Caco-2 (cell line): ENCODE measurements at regions of chr1 and their contacts with region 1.

Region 1: DNA sequence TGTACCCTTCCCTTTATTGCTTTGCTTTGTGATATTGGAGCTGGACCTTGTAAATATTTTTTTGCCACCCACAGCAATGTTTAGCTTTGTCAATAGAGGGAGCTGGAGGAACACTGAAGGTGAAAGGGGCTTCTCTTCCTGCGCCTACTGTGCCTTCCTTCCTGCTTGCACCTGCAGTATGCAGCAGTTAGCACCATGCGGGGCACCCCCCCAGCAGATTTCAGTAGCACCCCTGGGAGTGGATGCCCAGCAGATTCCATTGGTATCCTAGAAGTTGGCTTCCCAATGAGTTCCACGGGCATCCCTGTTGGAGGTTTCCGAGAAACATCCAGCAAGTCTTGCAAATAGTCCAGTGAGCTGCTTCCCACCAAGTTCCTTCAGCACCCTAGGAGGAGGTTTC is 25.6 kb downstream of the S100A10 start:
- DNase-seq: peak; percentile 69 to 77
- H3K4me3 ChIP-seq: no peak overlapping the region
- H3K4me3 Mint-ChIP-seq: no peak overlapping the region
- H3K27ac Mint-ChIP-seq: no peak overlapping the region
- H3K4me1 ChIP-seq: peaks cover 52% of the 10 kb centered on the region
- H3K4me1 Mint-ChIP-seq: peaks cover 34% of the 10 kb centered on the region
- H3K27me3 ChIP-seq: no peaks in the 10 kb centered on the region
- H3K27me3 Mint-ChIP-seq: no peaks in the 10 kb centered on the region
- CTCF ChIP-seq: peak; percentile 70 to 80

Region 2: DNA sequence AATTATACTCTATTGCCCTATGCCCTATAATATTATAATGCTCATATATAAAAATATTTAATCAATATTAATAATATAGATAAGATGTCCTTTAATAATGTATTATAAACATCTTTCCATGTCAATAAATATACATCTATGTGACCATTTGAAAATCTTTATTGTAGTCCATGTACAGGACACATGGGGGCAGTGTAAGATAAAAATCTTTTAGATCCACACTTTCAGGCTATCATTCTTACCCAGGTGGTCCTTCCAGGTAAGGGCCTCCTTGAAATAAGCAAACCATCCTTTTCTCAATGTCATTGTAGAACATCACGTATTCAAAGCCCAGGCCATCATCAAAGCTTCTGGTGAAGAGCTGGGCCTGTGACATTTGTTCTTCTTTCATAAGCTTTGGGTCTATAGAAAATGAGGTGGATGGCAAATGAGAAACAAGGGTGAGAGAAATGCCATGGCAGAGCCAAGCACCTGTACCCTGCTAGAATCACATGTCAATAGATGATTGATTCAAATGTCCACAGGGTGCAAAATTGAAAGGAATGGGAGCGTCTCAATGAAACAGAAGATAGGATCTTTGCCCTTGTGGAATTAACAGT is 79.0 kb before region 1 on chr1:
- CTCF ChIA-PET with region 1: no interaction called
- POLR2A ChIA-PET with region 1: no interaction called
- intact Hi-C with region 1: loop called (anchors 2 kb)
- DNase-seq: peak in 1 of 2 experiments; percentile 20
- H3K4me3 ChIP-seq: no peak overlapping the region
- H3K4me3 Mint-ChIP-seq: no peak overlapping the region
- H3K27ac Mint-ChIP-seq: no peak overlapping the region
- H3K4me1 ChIP-seq: no peaks in the 10 kb centered on the region
- H3K4me1 Mint-ChIP-seq: peaks cover 6% of the 10 kb centered on the region
- H3K27me3 ChIP-seq: no peaks in the 10 kb centered on the region
- H3K27me3 Mint-ChIP-seq: no peaks in the 10 kb centered on the region
- CTCF ChIP-seq: peak; percentile 38 to 53

Region 3: DNA sequence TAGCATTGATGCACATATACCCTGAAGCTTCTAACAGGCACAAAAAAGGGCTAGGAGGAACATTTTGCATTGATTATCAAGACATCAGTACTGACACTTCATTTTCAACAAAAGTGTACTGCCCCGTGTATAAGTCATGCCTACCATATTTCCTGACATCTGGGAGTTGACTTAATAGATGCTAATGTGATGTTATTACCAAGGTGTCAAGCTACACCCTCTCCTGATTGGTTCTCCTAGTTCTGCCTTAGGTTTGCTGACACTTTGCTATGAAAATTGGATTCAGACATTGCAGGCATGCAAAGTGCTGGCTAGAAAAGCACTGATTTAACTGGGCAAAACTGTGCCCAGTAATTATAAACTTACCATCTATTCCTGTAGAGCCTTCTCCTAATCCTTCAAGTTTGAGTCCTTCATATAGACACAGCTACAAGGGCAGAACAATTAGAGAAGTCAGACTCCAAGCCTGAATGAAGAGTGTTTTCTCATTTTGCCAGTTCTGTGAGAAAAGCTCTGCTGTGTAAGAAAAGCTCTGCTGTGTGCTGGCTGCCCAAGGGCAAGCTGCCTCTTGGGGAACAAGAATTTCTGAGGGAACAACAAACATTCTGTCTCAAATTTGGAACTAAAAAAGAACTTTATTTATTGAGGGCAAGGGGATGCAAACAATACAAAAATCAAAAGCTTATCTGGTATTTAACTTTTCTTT is 14.4 kb after region 1 on chr1:
- CTCF ChIA-PET with region 1: interaction called, 11 read pairs
- POLR2A ChIA-PET with region 1: interaction called, 10 read pairs
- intact Hi-C with region 1: loop called (anchors 1 kb)
- DNase-seq: no peak
- H3K4me3 ChIP-seq: no peak overlapping the region
- H3K4me3 Mint-ChIP-seq: peak overlapping the region; percentile 20
- H3K27ac Mint-ChIP-seq: peak overlapping the region; percentile 85
- H3K4me1 ChIP-seq: peaks cover 97% of the 10 kb centered on the region
- H3K4me1 Mint-ChIP-seq: peaks cover 77% of the 10 kb centered on the region
- H3K27me3 ChIP-seq: no peaks in the 10 kb centered on the region
- H3K27me3 Mint-ChIP-seq: no peaks in the 10 kb centered on the region
- CTCF ChIP-seq: no peak

Region 4: DNA sequence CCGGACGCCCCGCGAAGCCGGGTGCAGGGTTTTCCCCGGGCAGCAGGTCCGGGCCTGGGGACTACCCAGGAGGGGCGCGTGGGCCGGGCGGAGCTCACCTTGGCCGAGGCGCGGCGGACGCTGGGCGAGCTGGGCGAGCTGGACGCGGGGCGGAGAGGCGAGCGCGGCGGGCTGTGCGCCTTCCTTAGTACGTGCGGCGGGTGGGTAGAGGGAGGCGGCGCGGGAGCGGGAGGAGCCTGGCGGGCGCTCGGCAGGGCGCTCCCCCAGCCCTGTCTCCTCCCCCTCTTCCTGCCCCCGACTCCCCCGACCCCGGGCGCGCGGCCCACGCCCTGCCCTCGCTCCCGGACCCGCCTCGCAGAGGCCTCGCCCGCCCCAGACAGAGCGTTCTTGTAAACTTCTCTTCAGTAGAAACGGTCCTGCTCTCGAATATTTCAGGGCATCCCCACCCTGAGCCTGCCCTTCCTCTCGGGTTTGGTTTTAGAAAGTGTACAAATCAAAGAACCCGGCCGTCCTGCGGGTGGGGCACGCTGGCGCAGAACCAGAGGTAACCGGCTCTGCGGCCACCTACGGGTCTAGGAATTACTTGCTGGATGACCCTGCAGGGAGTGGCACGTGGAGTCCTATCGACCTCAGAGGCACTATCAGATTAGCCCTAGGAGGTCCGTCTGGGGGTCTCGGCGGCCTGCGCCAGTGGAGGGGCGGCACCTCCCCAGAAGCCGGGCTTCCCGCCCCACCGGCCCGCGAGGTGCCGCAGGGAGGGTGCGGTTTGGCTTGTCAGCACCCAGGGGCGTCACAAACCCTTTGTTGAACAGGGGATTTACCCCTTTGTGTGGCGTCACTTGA is 25.8 kb after region 1 on chr1 and contains the start of gene S100A10:
- CTCF ChIA-PET with region 1: interaction called, 249 read pairs
- POLR2A ChIA-PET with region 1: interaction called, 11 read pairs
- intact Hi-C with region 1: loop called (anchors 1 kb)
- DNase-seq: peak; percentile 90 to 91
- H3K4me3 ChIP-seq: peak within 1 kb of the TSS; percentile 88
- H3K4me3 Mint-ChIP-seq: peak within 1 kb of the TSS; percentile 88
- H3K27ac Mint-ChIP-seq: peak within 1 kb of the TSS; percentile 99
- H3K4me1 ChIP-seq: peaks cover 55% of the 10 kb centered on the region
- H3K4me1 Mint-ChIP-seq: peaks cover 34% of the 10 kb centered on the region
- H3K27me3 ChIP-seq: no peaks in the 10 kb centered on the region
- H3K27me3 Mint-ChIP-seq: no peaks in the 10 kb centered on the region
- CTCF ChIP-seq: no peak
- total RNA-seq, gene S100A10: 2,143 and 2,154 TPM in 2 replicates

Region 5: GRCh38 chr1:152013664-152014237 is 45.7 kb after region 1 on chr1:
- CTCF ChIA-PET with region 1: interaction called, 43 read pairs
- POLR2A ChIA-PET with region 1: no interaction called
- intact Hi-C with region 1: loop called (anchors 1 kb)
- DNase-seq: peak; percentile 68 to 69
- H3K4me3 ChIP-seq: no peak overlapping the region
- H3K4me3 Mint-ChIP-seq: no peak overlapping the region
- H3K27ac Mint-ChIP-seq: no peak overlapping the region
- H3K4me1 ChIP-seq: 0 out of 2 replicates have a peak, but pooled peaks cover 3% of the 10 kb centered on the region
- H3K4me1 Mint-ChIP-seq: peaks cover 7% of the 10 kb centered on the region
- H3K27me3 ChIP-seq: no peaks in the 10 kb centered on the region
- H3K27me3 Mint-ChIP-seq: no peaks in the 10 kb centered on the region
- CTCF ChIP-seq: peak; percentile 76 to 86

Region 6: DNA sequence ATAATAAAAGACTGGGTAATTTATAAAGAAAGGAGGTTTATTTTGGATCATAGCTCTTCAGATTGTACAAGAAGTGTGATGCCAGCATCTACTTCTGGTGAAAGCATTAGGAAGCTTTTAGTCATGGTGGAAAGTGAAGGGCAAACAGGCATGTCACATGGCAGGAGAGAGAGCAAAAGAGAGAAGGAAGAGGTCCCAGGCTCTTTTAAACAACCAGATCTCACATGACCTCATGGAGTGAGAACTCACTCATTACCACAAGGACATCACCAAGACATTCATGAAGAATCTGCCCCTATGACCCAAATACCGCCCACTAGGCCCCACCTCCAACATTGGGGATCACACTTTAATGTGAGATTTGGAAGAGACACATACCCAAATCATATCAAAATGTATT is 180.9 kb after region 1 on chr1:
- CTCF ChIA-PET with region 1: no interaction called
- POLR2A ChIA-PET with region 1: no interaction called
- intact Hi-C with region 1: no loop called
- DNase-seq: no peak
- H3K4me3 ChIP-seq: no peak overlapping the region
- H3K4me3 Mint-ChIP-seq: no peak overlapping the region
- H3K27ac Mint-ChIP-seq: no peak overlapping the region
- H3K4me1 ChIP-seq: no peaks in the 10 kb centered on the region
- H3K4me1 Mint-ChIP-seq: no peaks in the 10 kb centered on the region
- H3K27me3 ChIP-seq: no peaks in the 10 kb centered on the region
- H3K27me3 Mint-ChIP-seq: no peaks in the 10 kb centered on the region
- CTCF ChIP-seq: no peak